ENCODE measurements at regions of chr1 and their contacts with region 1.

Region 1: GRCh38 chr1:162497723-162498500 is at the start of gene UHMK1:
- DNase-seq: peak; percentile 81 to 96 (median 87)
- ATAC-seq: peak; percentile 97
- H3K4me3 ChIP-seq: peak within 1 kb of the TSS; percentile 92
- H3K4me3 Mint-ChIP-seq: peak within 1 kb of the TSS; percentile 92
- H3K27ac ChIP-seq: peak within 1 kb of the TSS; percentile 29 to 79
- H3K27ac Mint-ChIP-seq: peak within 1 kb of the TSS; percentile 86
- H3K4me1 ChIP-seq: peaks cover 17% of the 10 kb centered on the region
- H3K4me1 Mint-ChIP-seq: peaks cover 40% of the 10 kb centered on the region
- H3K27me3 ChIP-seq: no peaks in the 10 kb centered on the region
- H3K27me3 Mint-ChIP-seq: no peaks in the 10 kb centered on the region
- CTCF ChIP-seq: no peak
- total RNA-seq, gene UHMK1: 47.3 to 47.6 TPM

Region 2: DNA sequence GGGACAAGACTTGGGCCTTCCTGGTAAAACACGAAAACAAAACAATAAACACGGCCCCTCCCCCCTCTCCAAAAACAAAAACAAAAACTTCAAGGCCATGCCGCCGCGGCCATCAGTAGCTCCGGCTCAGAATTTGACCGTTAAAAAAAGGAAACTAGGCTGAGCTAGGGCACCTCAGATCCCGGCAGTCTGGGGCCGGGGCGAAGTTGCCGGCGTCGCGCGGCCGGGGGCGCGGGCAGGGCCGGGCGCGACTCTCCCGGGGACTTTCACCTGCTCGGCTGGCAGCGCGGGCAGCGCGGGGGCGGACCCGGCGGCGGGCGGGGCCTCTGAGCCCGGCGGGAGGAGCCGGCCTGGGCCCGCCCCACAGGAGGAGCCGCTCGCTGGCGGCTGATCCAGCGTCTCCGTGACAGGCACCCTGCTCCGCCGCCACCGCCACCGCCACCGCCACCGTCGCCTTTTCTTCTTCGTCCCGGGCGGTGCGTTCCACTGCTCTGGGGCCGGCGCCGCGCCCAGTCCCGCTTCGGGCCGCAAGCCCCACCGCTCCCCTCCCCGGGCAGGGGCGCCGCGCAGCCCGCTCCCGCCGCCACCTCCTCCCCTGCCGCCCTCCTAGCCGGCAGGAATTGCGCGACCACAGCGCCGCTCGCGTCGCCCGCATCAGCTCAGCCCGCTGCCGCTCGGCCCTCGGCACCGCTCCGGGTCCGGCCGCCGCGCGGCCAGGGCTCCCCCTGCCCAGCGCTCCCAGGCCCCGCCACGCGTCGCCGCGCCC is 428.4 kb before region 1 on chr1 and contains the start of gene NOS1AP:
- CTCF ChIA-PET with region 1: no interaction called
- POLR2A ChIA-PET with region 1: no interaction called
- intact Hi-C with region 1: loop called in 1 of 2 experiments (anchors 5 kb)
- DNase-seq: peak; percentile 52 to 88 (median 70)
- ATAC-seq: peak; percentile 99
- H3K4me3 ChIP-seq: peak within 1 kb of the TSS; percentile 48
- H3K4me3 Mint-ChIP-seq: peak within 1 kb of the TSS; percentile 86
- H3K27ac ChIP-seq: no peak within 1 kb of the TSS
- H3K27ac Mint-ChIP-seq: no peak within 1 kb of the TSS
- H3K4me1 ChIP-seq: peaks cover 14% of the 10 kb centered on the region
- H3K4me1 Mint-ChIP-seq: peaks cover 7% of the 10 kb centered on the region
- H3K27me3 ChIP-seq: peaks cover 32 to 54% of the 10 kb centered on the region in 2 experiments
- H3K27me3 Mint-ChIP-seq: peaks cover 81% of the 10 kb centered on the region
- CTCF ChIP-seq: no peak
- total RNA-seq, gene NOS1AP: not detected

Region 3: GRCh38 chr1:162430583-162430982 is 67.3 kb before region 1 on chr1:
- CTCF ChIA-PET with region 1: no interaction called
- POLR2A ChIA-PET with region 1: no interaction called
- intact Hi-C with region 1: no loop called
- DNase-seq: no peak
- ATAC-seq: no peak
- H3K4me3 ChIP-seq: no peak overlapping the region
- H3K4me3 Mint-ChIP-seq: no peak overlapping the region
- H3K27ac ChIP-seq: no peak overlapping the region
- H3K27ac Mint-ChIP-seq: no peak overlapping the region
- H3K4me1 ChIP-seq: no peaks in the 10 kb centered on the region
- H3K4me1 Mint-ChIP-seq: no peaks in the 10 kb centered on the region
- H3K27me3 ChIP-seq: no peaks in the 10 kb centered on the region
- H3K27me3 Mint-ChIP-seq: no peaks in the 10 kb centered on the region
- CTCF ChIP-seq: no peak

Region 4: GRCh38 chr1:162485236-162485635 is 12.7 kb before region 1 on chr1:
- CTCF ChIA-PET with region 1: no interaction called
- POLR2A ChIA-PET with region 1: no interaction called
- intact Hi-C with region 1: no loop called
- DNase-seq: no peak
- ATAC-seq: no peak
- H3K4me3 ChIP-seq: no peak overlapping the region
- H3K4me3 Mint-ChIP-seq: no peak overlapping the region
- H3K27ac ChIP-seq: no peak overlapping the region
- H3K27ac Mint-ChIP-seq: no peak overlapping the region
- H3K4me1 ChIP-seq: no peaks in the 10 kb centered on the region
- H3K4me1 Mint-ChIP-seq: no peaks in the 10 kb centered on the region
- H3K27me3 ChIP-seq: peaks cover 0 to 6% of the 10 kb centered on the region in 2 experiments
- H3K27me3 Mint-ChIP-seq: peaks cover 40% of the 10 kb centered on the region
- CTCF ChIP-seq: no peak